ENCODE measurements at regions of chr20 and their contacts with region 1.

Region 1: DNA sequence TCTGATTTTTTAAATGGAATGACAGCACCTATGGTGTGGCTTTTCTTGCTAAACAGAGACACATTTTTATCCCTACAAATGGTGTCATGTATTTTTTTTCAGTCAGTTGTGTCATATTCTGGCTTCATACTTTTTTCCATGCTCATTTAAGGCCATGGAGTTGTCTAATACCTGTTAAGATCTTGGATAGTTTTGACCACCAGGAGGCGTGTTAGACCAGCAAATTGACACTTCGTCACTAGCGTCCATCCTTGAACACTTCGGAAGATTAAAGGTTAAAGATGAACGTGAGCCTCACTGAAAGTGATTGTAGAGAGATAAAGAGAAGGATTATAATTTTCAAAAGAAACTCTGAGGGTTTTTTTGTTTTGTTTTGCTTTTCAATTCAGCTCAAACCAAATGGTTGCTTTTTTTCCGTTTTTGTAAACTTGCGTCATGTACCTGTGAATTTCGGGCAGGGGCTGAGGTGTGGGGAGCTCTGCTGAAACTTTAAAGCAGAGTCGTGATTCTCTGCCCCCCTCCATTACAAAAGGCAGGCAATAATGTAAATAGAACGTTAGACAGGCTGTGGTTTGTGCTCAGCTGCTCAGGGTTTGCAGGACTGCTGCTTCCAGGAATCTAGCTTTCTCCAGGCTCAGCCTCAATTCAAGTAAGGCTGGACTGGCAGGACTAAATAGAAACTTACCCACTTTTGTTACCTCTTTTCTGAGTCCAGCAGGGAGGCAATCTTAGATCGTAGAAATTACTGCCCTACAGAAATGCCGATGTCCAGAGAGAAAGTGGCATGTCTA is 245.1 kb downstream of the FOXA2 start:
- DNase-seq: peak; percentile 65
- H3K4me3 ChIP-seq: no peak overlapping the region
- H3K27ac ChIP-seq: no peak overlapping the region
- H3K4me1 ChIP-seq: no peaks in the 10 kb centered on the region
- CTCF ChIP-seq: peak; percentile 91

Region 2: GRCh38 chr20:22288957-22289356 is 50.3 kb before region 1 on chr20:
- CTCF ChIA-PET with region 1: no interaction called
- POLR2A ChIA-PET with region 1: no interaction called
- intact Hi-C with region 1: no loop called
- DNase-seq: no peak
- H3K4me3 ChIP-seq: no peak overlapping the region
- H3K27ac ChIP-seq: no peak overlapping the region
- H3K4me1 ChIP-seq: no peaks in the 10 kb centered on the region
- CTCF ChIP-seq: no peak

Region 3: GRCh38 chr20:22320245-22320917 is 18.9 kb before region 1 on chr20:
- CTCF ChIA-PET with region 1: no interaction called
- POLR2A ChIA-PET with region 1: no interaction called
- intact Hi-C with region 1: no loop called
- DNase-seq: no peak
- H3K4me3 ChIP-seq: no peak overlapping the region
- H3K27ac ChIP-seq: no peak overlapping the region
- H3K4me1 ChIP-seq: no peaks in the 10 kb centered on the region
- CTCF ChIP-seq: no peak

Region 4: GRCh38 chr20:22684072-22684762 is 344.9 kb after region 1 on chr20:
- CTCF ChIA-PET with region 1: no interaction called
- POLR2A ChIA-PET with region 1: no interaction called
- intact Hi-C with region 1: loop called (anchors 1 kb)
- DNase-seq: peak; percentile 67
- H3K4me3 ChIP-seq: no peak overlapping the region
- H3K27ac ChIP-seq: no peak overlapping the region
- H3K4me1 ChIP-seq: peaks cover 4% of the 10 kb centered on the region
- CTCF ChIP-seq: peak; percentile 87

Region 5: GRCh38 chr20:22700367-22700766 is 361.1 kb after region 1 on chr20:
- CTCF ChIA-PET with region 1: no interaction called
- POLR2A ChIA-PET with region 1: no interaction called
- intact Hi-C with region 1: no loop called
- DNase-seq: no peak
- H3K4me3 ChIP-seq: no peak overlapping the region
- H3K27ac ChIP-seq: no peak overlapping the region
- H3K4me1 ChIP-seq: no peaks in the 10 kb centered on the region
- CTCF ChIP-seq: no peak

Region 6: DNA sequence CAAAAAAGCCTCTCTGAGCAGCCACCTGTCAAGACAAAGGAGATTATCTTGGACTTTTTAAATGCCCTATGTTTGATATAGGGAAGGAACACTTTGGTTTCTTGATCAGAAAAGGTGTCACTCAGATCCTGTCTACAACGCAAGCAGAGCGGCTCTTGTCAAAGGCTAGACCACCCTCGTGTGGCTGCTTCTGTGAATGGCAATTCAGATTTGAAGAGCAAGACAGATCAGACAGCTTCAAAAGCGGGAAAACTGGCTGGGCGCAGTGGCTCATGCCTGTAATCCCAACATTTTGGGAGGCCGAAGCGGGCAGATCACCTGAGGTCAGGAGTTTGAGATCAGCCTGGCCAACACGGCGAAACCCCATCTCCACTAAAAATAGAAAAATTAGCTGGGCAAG is 1001.2 kb after region 1 on chr20:
- CTCF ChIA-PET with region 1: no interaction called
- POLR2A ChIA-PET with region 1: interaction called, 5 read pairs
- intact Hi-C with region 1: loop called (anchors 5 kb)
- DNase-seq: peak; percentile 58
- H3K4me3 ChIP-seq: no peak overlapping the region
- H3K27ac ChIP-seq: no peak overlapping the region
- H3K4me1 ChIP-seq: no peaks in the 10 kb centered on the region
- CTCF ChIP-seq: peak; percentile 73

Measured in OCI-LY7 (cell line).